ENCODE measurements at regions of chr22 and their contacts with region 1.

Region 1: GRCh38 chr22:30289134-30289979 is at the start of gene CASTOR1:
- DNase-seq: peak; percentile 98
- H3K4me3 Mint-ChIP-seq: peak within 1 kb of the TSS; percentile 77
- H3K27ac Mint-ChIP-seq: peak within 1 kb of the TSS; percentile 62
- H3K4me1 Mint-ChIP-seq: peaks cover 6% of the 10 kb centered on the region
- H3K27me3 Mint-ChIP-seq: no peaks in the 10 kb centered on the region
- CTCF ChIP-seq: no peak
- total RNA-seq, gene CASTOR1: 1.2 and 4.8 TPM in 2 replicates

Region 2: GRCh38 chr22:30262917-30263741 is 26.2 kb before region 1 on chr22:
- CTCF ChIA-PET with region 1: interaction called, 34 read pairs
- POLR2A ChIA-PET with region 1: interaction called, 4 read pairs
- intact Hi-C with region 1: loop called (anchors 1 kb)
- DNase-seq: peak; percentile 64
- H3K4me3 Mint-ChIP-seq: peak overlapping the region; percentile 47
- H3K27ac Mint-ChIP-seq: no peak overlapping the region
- H3K4me1 Mint-ChIP-seq: peaks cover 6% of the 10 kb centered on the region
- H3K27me3 Mint-ChIP-seq: no peaks in the 10 kb centered on the region
- CTCF ChIP-seq: peak; percentile 99

Region 3: DNA sequence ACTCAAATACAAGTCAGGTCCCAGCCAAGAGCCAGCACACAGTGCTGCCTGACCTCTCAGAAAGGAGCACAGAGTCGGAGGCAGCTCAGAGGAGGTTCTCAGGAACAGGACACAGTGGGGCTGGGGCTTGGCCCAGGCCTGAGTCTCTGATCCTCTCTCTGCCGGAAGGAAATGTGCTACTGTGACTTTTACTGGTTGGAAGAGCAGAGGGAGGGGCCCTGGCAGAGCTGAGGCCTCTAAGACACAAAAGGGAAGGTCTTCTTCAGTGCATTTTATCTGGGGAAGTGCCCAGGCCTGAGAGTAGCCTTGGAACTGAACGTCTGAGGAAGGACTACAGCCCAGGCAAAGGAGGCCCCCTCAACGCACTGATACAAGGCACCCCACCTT is 16.2 kb after region 1 on chr22:
- CTCF ChIA-PET with region 1: interaction called, 26 read pairs
- POLR2A ChIA-PET with region 1: interaction called, 47 read pairs
- intact Hi-C with region 1: no loop called
- DNase-seq: peak; percentile 42
- H3K4me3 Mint-ChIP-seq: peak overlapping the region; percentile 15
- H3K27ac Mint-ChIP-seq: peak overlapping the region; percentile 49
- H3K4me1 Mint-ChIP-seq: peaks cover 60% of the 10 kb centered on the region
- H3K27me3 Mint-ChIP-seq: no peaks in the 10 kb centered on the region
- CTCF ChIP-seq: no peak

Region 4: GRCh38 chr22:30356449-30357235 is 67.3 kb after region 1 on chr22 and contains the starts of genes CCDC157 and SF3A1:
- CTCF ChIA-PET with region 1: interaction called, 13 read pairs
- POLR2A ChIA-PET with region 1: interaction called, 33 read pairs
- intact Hi-C with region 1: loop called (anchors 2 kb)
- DNase-seq: peak; percentile 86
- H3K4me3 Mint-ChIP-seq: peak within 1 kb of the TSS; percentile 94
- H3K27ac Mint-ChIP-seq: peak within 1 kb of the TSS; percentile 89
- H3K4me1 Mint-ChIP-seq: peaks cover 28% of the 10 kb centered on the region
- H3K27me3 Mint-ChIP-seq: no peaks in the 10 kb centered on the region
- CTCF ChIP-seq: no peak
- total RNA-seq, gene CCDC157: 1.1 and 1.7 TPM in 2 replicates
- total RNA-seq, gene SF3A1: 167 and 193 TPM in 2 replicates

Region 5: DNA sequence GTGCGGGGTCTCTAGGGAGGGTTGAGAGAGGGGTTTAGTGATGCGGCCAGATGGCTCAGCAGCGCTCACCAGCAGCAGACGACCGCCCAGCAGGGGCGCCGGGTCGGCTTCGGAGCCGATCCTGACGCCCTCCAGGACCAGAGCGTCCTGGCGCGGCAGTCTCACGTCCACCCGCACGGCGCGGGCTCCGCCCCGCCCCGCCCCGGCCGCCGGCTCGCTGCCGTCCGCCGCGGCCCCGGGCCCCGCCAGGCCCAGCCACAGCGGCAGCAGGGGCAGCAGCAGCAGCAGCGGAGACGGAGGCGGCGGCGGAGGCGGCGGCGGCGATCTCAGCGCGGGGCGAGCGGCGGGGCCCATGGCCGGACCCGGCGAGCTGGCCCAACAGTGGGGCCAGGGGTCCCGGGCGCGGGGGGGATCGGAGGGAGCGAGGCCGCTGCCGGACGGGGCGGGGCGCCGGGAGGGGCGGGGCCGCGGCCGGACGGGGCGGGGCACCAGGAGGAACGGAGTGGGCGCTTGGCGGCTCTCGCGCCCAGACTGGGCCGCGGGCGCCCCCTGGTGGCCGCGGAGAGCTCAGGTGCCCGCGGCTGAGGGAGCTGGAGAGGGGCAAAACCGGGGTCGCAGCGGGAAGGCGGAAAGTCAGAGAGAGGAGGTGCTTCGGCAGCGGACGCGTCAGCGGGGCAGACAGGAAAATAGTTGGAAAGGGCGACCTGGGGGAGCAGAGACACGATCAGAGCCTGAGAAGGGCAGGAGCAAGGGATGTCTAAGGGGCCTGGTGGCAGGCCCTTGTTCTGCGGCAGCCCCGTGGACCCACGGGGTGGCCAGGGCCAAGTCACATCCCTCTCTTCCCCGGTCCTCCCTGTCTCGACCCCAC is 97.8 kb after region 1 on chr22 and contains the start of gene RNF215:
- CTCF ChIA-PET with region 1: interaction called, 48 read pairs
- POLR2A ChIA-PET with region 1: interaction called, 5 read pairs
- intact Hi-C with region 1: loop called (anchors 1 kb)
- DNase-seq: peak; percentile 74
- H3K4me3 Mint-ChIP-seq: peak within 1 kb of the TSS; percentile 79
- H3K27ac Mint-ChIP-seq: peak within 1 kb of the TSS; percentile 74
- H3K4me1 Mint-ChIP-seq: peaks cover 12% of the 10 kb centered on the region
- H3K27me3 Mint-ChIP-seq: no peaks in the 10 kb centered on the region
- CTCF ChIP-seq: peak; percentile 95
- total RNA-seq, gene RNF215: 18.4 and 19.6 TPM in 2 replicates

Region 6: GRCh38 chr22:30423982-30424963 is 134.9 kb after region 1 on chr22:
- CTCF ChIA-PET with region 1: interaction called, 6 read pairs
- POLR2A ChIA-PET with region 1: interaction called, 22 read pairs
- intact Hi-C with region 1: loop called (anchors 1 kb)
- DNase-seq: peak; percentile 100
- H3K4me3 Mint-ChIP-seq: peak overlapping the region; percentile 90
- H3K27ac Mint-ChIP-seq: peak overlapping the region; percentile 97
- H3K4me1 Mint-ChIP-seq: peaks cover 44% of the 10 kb centered on the region
- H3K27me3 Mint-ChIP-seq: no peaks in the 10 kb centered on the region
- CTCF ChIP-seq: peak; percentile 10

Region 7: GRCh38 chr22:30556388-30556787 is 267.0 kb after region 1 on chr22:
- CTCF ChIA-PET with region 1: no interaction called
- POLR2A ChIA-PET with region 1: no interaction called
- intact Hi-C with region 1: no loop called
- DNase-seq: no peak
- H3K4me3 Mint-ChIP-seq: no peak overlapping the region
- H3K27ac Mint-ChIP-seq: no peak overlapping the region
- H3K4me1 Mint-ChIP-seq: no peaks in the 10 kb centered on the region
- H3K27me3 Mint-ChIP-seq: no peaks in the 10 kb centered on the region
- CTCF ChIP-seq: no peak

Measured in MCF 10A (cell line).